Activated CD4-positive, alpha-beta memory T cell treated with anti-CD3 and anti-CD28 coated beads for 36 hours (primary cell): ENCODE measurements at regions of chr9 and their contacts with region 1.

Region 1: GRCh38 chr9:129177791-129178559 is at the start of gene IER5L:
- DNase-seq: peak; percentile 94
- H3K4me3 Mint-ChIP-seq: peak within 1 kb of the TSS; percentile 85
- H3K27ac Mint-ChIP-seq: no peak within 1 kb of the TSS
- H3K4me1 Mint-ChIP-seq: peaks cover 3% of the 10 kb centered on the region
- H3K27me3 Mint-ChIP-seq: peaks cover 8% of the 10 kb centered on the region
- total RNA-seq, gene IER5L: 1.3 to 1.5 TPM

Region 2: GRCh38 chr9:129237195-129237611 is 59.2 kb after region 1 on chr9:
- CTCF ChIA-PET with region 1: interaction called, 16 read pairs
- POLR2A ChIA-PET with region 1: interaction called, 13 read pairs
- intact Hi-C with region 1: loop called (anchors 1 kb)
- DNase-seq: peak; percentile 77
- H3K4me3 Mint-ChIP-seq: peak overlapping the region; percentile 68
- H3K27ac Mint-ChIP-seq: peak overlapping the region; percentile 88
- H3K4me1 Mint-ChIP-seq: peaks cover 49% of the 10 kb centered on the region
- H3K27me3 Mint-ChIP-seq: no peaks in the 10 kb centered on the region

Region 3: GRCh38 chr9:129333953-129334724 is 156.2 kb after region 1 on chr9:
- CTCF ChIA-PET with region 1: no interaction called
- POLR2A ChIA-PET with region 1: interaction called, 3 read pairs
- intact Hi-C with region 1: loop called (anchors 10 kb)
- DNase-seq: peak; percentile 36
- H3K4me3 Mint-ChIP-seq: no peak overlapping the region
- H3K27ac Mint-ChIP-seq: no peak overlapping the region
- H3K4me1 Mint-ChIP-seq: peaks cover 9% of the 10 kb centered on the region
- H3K27me3 Mint-ChIP-seq: no peaks in the 10 kb centered on the region

Region 4: DNA sequence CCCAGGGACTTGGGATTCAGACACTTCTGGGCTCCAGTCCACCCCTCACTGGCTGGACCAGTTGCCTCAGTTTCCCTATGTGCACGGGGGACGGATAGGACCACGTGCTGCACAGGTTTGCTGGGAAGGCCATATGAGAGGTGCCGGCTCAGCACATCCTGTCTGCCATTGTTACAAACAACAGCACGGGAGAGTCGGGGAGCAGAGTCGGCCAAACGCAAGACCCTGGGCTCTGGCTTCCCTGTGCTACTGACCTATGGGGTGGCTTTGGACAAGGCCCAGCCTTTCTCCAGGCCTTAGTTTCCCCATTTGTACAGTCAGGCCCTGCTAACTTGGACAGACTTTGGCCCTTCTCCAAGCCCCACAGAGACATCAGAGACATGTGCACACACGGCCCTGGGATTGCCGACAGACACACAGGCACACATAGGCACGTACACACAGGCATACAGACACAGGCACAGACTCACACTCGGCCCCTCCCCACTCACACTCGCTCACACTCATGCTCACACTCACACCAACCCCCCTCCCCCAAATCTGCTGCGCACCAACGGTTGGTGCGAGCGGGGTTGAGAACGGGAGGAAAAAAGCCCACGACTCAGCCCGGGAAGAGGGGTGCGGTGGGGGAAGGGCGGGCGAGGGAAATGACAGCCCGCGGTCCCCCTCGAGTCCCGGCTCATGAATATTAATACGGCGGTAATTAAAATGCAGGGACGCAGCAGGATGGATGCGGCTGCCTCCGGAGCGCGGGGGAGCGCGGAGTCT is 309.9 kb after region 1 on chr9:
- CTCF ChIA-PET with region 1: interaction called, 4 read pairs
- POLR2A ChIA-PET with region 1: interaction called, 4 read pairs
- intact Hi-C with region 1: loop called (anchors 5 kb)
- DNase-seq: peak; percentile 58
- H3K4me3 Mint-ChIP-seq: peak overlapping the region; percentile 85
- H3K27ac Mint-ChIP-seq: peak overlapping the region; percentile 97
- H3K4me1 Mint-ChIP-seq: peaks cover 68% of the 10 kb centered on the region
- H3K27me3 Mint-ChIP-seq: no peaks in the 10 kb centered on the region

Region 5: GRCh38 chr9:129610473-129611301 is 432.7 kb after region 1 on chr9:
- CTCF ChIA-PET with region 1: interaction called, 11 read pairs
- POLR2A ChIA-PET with region 1: interaction called, 5 read pairs
- intact Hi-C with region 1: loop called (anchors 2 kb)
- DNase-seq: peak; percentile 84
- H3K4me3 Mint-ChIP-seq: peak overlapping the region; percentile 69
- H3K27ac Mint-ChIP-seq: peak overlapping the region; percentile 54
- H3K4me1 Mint-ChIP-seq: peaks cover 31% of the 10 kb centered on the region
- H3K27me3 Mint-ChIP-seq: peaks cover 2% of the 10 kb centered on the region